Ascending aorta (tissue), 2 donors: ENCODE measurements at regions of chr19 and their contacts with region 1.

Region 1: DNA sequence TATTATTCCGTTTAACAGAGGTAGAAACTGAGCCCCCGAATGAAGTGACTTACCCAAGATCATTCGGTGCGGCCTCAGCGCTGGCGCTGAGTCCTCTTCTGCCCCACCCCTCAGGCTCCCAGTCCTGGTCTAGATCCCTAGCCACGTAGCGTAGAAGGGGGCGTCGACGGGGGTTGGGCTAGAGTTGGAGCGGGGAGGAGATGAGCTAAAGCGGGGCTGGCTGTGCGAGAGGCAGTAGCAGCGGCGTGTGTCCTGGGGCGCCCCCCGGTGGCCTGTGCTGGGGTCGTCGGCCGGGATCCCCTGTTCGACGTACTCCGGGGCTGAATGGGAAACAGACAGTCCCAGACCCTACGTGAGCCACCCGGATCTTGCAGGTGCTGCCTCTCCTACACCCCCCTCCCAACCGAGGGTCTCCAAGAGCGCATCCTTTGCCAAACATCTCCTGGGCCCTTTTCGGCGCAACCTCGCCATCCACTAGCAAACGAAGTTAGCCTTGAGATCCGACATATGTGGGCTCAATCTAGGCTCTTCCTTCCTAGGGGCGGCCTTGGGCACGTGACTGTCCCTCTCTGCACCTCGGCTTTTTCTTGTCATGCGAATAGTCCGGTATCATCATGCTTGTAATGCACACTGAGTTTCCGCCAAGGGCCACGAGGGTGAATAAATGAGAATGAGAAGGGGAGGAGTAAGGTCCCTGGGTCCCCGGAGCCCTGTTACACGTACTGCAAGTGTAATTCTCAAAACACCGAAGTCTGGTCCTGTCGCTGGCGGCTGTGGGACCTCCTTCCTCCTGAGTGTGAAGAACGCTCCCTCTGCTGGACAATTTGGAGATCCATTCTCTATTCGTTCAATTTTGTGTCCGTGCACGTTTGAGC is 47.7 kb downstream of the CYP4F22 start:
- DNase-seq: peak; percentile 73 to 94
- H3K4me3 ChIP-seq: peak overlapping the region; percentile 44 to 59
- H3K27ac ChIP-seq: peak overlapping the region in 1 of 2 donors; percentile 55
- H3K4me1 ChIP-seq: peaks cover 6 to 8% of the 10 kb centered on the region in 2 donors
- H3K27me3 ChIP-seq: no peaks in the 10 kb centered on the region
- CTCF ChIP-seq: peak; percentile 77 to 89 (median 77)

Region 2: DNA sequence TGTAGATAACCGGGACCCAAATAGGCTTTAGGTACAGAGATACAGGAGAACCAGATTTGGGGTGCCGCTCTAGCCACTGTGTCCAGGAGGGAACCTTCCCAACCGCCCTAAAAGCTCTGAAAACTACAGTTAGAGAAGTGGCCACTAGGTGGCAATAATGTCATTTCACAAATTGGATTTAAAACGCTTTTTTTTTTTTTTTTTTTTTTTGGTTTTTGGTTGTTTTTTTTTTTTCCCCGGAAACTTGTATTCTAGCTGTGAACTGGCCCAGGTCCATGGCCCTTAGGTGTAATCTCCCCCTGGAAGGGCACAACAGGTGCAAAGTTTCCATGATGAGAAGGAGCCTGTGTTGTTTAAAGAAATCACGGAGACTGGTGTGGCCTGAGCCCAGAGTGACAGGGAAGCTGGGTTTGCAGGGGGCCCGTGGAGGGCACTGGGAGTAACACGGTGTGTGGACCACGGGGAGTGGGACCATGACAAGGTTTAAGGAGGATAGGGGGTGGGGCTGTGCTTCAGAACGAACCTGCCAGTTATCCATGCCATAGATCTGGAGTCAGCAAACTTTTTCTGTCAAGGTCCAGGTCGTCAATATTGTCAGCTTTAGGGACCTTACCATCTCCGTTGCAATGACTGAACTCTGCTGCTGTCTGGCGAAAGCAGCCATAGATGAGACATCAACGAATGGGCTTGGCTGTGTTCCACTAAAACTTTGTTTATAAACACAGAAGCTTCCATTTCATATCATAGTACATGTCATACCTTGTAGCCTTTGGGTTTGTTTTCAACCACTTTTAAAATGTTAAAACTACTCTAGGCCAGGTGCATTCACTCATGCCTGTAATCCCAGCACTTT is 463.9 kb before region 1 on chr19:
- intact Hi-C with region 1: loop called (anchors 1 kb)
- DNase-seq: no peak
- H3K4me3 ChIP-seq: peak overlapping the region in 1 of 2 donors; percentile 31
- H3K27ac ChIP-seq: no peak overlapping the region
- H3K4me1 ChIP-seq: no peaks in the 10 kb centered on the region
- H3K27me3 ChIP-seq: no peaks in the 10 kb centered on the region
- CTCF ChIP-seq: peak; percentile 30 to 72 (median 58)

Region 3: DNA sequence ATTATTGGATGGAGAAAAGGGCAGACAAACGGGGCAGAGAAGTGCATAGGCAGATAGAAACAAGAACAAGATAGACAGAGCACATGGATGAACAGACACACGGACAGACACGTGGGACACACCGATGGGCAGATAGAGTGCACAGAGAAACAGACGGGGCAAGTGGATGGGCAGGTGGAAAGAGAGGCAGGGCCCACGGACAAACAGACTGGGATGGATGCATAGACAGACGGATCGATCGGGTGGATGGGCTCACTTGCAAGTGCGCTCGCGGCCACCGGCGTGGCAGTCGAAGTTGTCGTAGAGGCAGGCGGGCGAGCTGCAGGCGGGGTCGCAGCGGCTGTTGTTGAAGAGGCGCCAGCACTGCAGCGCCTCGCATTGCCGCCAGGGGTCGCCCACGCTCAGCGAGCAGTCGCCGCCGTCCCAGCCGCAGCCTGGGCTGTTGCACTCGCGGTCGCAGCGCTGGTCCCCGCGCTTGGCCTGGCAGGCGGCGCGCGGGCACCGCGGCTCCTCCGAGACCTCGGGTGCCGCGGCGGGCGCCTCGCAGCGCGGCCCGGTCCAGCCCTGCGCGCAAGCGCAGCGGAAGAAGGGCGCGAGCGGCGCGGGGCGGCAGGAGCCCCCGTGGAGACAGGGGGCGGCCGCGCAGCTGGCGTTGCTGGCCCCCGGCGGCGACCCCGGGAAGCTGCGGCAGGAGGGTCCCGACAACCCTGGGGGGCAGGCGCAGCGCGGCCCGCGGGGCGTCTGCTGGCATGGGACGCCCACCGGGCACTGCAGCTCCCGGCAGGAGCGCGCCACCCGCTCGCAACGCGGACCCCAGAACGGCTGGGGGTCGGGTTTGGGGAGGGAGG is 378.5 kb before region 1 on chr19:
- intact Hi-C with region 1: loop called (anchors 2 kb)
- DNase-seq: peak in 1 of 2 donors; percentile 89
- H3K4me3 ChIP-seq: peak overlapping the region; percentile 28 to 51
- H3K27ac ChIP-seq: peak overlapping the region; percentile 55 to 72
- H3K4me1 ChIP-seq: no peaks in the 10 kb centered on the region
- H3K27me3 ChIP-seq: no peaks in the 10 kb centered on the region
- CTCF ChIP-seq: peak; percentile 95 to 99 (median 95)

Region 4: GRCh38 chr19:15418588-15419412 is 137.2 kb before region 1 on chr19 and contains the start of gene AKAP8L:
- intact Hi-C with region 1: loop called (anchors 5 kb)
- DNase-seq: peak; percentile 99 to 100
- H3K4me3 ChIP-seq: peak within 1 kb of the TSS; percentile 88 to 97
- H3K27ac ChIP-seq: peak within 1 kb of the TSS; percentile 87 to 88
- H3K4me1 ChIP-seq: peaks cover 5 to 35% of the 10 kb centered on the region in 2 donors
- H3K27me3 ChIP-seq: no peaks in the 10 kb centered on the region
- CTCF ChIP-seq: peak; percentile 25 to 60 (median 45)
- total RNA-seq, gene AKAP8L: 143 TPM

Region 5: DNA sequence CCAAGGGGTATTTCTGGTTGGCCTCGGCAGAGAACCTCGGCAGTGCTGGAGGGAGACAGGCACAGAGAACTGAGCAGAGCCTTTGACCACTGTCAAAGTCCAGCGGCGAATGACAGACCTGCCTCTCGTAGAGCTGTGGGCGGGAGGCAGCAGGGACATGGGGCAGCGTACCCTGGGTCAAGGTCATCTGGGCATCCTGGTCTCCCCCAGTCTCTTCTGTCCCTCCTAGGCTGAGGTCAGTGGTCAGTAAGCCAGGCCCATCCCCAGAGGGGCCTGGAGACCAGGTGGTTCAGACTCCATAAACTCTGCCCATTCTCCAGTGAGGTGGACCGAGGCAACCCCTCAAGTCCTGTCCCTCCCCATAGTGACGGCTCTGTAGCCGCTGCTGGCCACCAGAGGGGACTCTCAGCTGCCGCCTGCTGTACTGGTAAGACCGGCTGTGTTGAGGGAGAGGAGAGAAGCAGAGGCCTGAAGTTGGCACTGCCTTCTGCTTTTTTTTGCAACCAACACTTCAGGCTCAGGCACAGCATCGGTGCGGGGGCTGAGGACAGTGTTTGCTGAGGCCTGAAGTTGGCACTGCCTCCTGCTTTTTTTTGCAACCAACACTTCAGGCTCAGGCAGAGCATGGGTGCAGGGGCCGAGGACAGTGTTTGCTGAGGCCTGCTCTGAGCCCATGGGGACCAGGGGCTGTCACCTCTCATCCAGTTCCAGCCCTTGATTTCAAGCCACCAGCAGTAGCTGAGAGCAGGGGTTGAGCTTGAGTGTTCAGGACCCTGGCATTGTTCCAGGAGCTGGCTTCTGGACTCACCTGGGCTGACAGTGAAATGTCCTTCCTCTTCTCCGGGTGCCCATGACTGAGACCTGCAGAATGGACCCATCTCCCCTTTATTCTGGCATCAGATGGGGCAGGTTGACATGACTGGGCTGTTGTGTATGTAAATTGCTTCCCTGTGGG is 76.3 kb before region 1 on chr19 and contains the start of gene PGLYRP2:
- intact Hi-C with region 1: no loop called
- DNase-seq: no peak
- H3K4me3 ChIP-seq: no peak within 1 kb of the TSS
- H3K27ac ChIP-seq: no peak within 1 kb of the TSS
- H3K4me1 ChIP-seq: no peaks in the 10 kb centered on the region
- H3K27me3 ChIP-seq: no peaks in the 10 kb centered on the region
- CTCF ChIP-seq: peak in 2 of 3 experiments; percentile 12 to 19
- total RNA-seq, gene PGLYRP2: not detected